H1 (cell line): ENCODE measurements at regions of chr1 and their contacts with region 1.

Region 1: GRCh38 chr1:93980320-93981273 is 71.4 kb upstream of the GCLM start:
- DNase-seq: peak in 1 of 2 experiments; percentile 58
- H3K4me3 ChIP-seq: no peak overlapping the region
- H3K27ac ChIP-seq: no peak overlapping the region
- H3K4me1 ChIP-seq: peaks cover 1 to 10% (median 6%) of the 10 kb centered on the region in 4 experiments; a peak in 6 of 7 replicates
- H3K27me3 ChIP-seq: no peaks in the 10 kb centered on the region
- CTCF ChIP-seq: peak; percentile 65 to 78 (median 73)
- EP300 ChIP-seq: no peak
- POLR2A ChIP-seq: no peak
- RAD21 ChIP-seq: peak; percentile 29 to 54; a peak in 3 of 4 replicates

Region 2: DNA sequence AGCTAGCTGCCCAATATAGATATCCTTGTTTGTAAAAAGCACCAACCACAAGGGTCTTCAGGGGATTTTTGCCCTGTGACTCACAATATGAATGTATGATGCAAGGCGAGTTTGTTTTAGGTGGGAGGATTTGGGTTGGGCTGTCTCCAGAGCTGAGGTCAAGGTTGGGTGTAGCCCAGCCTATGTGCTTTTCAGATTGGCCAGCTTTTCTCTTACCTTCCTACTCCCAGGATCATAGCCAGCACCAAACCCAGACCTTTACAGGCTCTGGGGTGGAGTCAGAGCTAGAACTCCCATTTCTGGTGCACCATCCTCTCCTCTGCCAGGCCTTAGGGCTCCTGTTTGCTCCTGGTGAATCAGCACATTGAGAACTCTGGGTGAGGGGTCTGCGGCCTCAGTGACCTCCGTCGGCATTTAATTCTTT is 15.8 kb before region 1 on chr1:
- CTCF ChIA-PET with region 1: interaction called, 66 read pairs
- POLR2A ChIA-PET with region 1: no interaction called
- DNase-seq: no peak
- H3K4me3 ChIP-seq: no peak overlapping the region
- H3K27ac ChIP-seq: no peak overlapping the region
- H3K4me1 ChIP-seq: no peaks in the 10 kb centered on the region
- H3K27me3 ChIP-seq: no peaks in the 10 kb centered on the region
- CTCF ChIP-seq: no peak
- EP300 ChIP-seq: no peak
- POLR2A ChIP-seq: no peak
- RAD21 ChIP-seq: no peak

Region 3: GRCh38 chr1:93995837-93996536 is 15.4 kb after region 1 on chr1:
- CTCF ChIA-PET with region 1: interaction called, 46 read pairs
- POLR2A ChIA-PET with region 1: no interaction called
- DNase-seq: no peak
- H3K4me3 ChIP-seq: no peak overlapping the region
- H3K27ac ChIP-seq: no peak overlapping the region
- H3K4me1 ChIP-seq: no peaks in the 10 kb centered on the region
- H3K27me3 ChIP-seq: no peaks in the 10 kb centered on the region
- CTCF ChIP-seq: no peak
- EP300 ChIP-seq: no peak
- POLR2A ChIP-seq: no peak
- RAD21 ChIP-seq: no peak

Region 4: DNA sequence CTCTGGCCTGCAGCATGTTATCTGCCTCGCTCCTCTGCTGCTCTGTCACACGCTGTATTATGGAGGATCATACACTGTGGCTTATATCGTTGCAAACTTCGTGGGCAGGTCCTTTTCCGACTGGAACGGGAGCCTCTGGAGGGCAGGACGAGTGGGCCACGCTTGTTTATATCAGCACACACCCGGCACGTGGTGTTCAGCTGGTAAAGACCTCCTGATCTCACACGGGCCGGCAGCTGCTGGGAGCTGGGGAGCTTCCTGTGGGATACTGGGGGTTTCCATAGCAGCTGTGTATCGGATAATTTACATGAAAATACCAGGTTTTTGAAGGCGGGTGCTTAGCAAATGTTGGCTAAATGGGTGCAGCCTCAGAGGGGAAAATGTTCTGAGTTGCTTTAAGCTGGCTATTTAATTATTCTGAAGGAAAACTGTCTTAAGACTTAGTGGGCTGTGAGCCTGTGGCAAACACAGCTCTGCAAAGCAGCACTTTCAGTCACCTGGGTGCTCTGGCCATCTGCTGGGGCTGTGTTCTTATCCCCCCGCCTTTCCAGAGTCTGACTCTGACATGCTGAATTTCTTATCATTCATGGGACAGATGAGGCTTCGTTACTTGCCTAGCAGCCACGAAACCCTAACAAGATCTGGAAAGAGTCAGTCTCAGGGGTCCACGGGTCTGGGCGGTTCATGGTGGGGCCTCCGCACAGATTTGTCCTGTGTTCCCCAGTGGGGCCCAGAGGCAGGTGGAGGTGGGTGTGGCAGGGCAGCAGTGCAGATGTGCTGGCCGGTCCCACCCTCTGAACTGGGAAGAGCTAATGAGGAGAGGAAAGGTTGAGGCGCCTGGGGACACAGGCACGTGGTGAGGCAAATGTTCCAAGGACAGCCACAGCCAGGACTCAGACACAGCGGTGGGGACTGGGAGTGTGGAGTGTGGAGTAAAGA is 32.4 kb after region 1 on chr1:
- CTCF ChIA-PET with region 1: interaction called, 10 read pairs
- POLR2A ChIA-PET with region 1: interaction called, 4 read pairs
- DNase-seq: peak in 1 of 2 experiments; percentile 62
- H3K4me3 ChIP-seq: peak overlapping the region in 1 of 4 experiments; percentile 24; a peak in 1 of 8 replicates
- H3K27ac ChIP-seq: no peak overlapping the region
- H3K4me1 ChIP-seq: peaks cover 6 to 24% (median 15%) of the 10 kb centered on the region in 4 experiments
- H3K27me3 ChIP-seq: peaks cover 0 to 28% (median 14%) of the 10 kb centered on the region in 4 experiments; a peak in 4 of 7 replicates
- CTCF ChIP-seq: no peak
- EP300 ChIP-seq: no peak
- POLR2A ChIP-seq: no peak
- RAD21 ChIP-seq: no peak

Region 5: GRCh38 chr1:94258873-94259331 is 278.3 kb after region 1 on chr1:
- CTCF ChIA-PET with region 1: no interaction called
- POLR2A ChIA-PET with region 1: no interaction called
- DNase-seq: no peak
- H3K4me3 ChIP-seq: no peak overlapping the region
- H3K27ac ChIP-seq: no peak overlapping the region
- H3K4me1 ChIP-seq: peaks cover 0 to 5% (median 2%) of the 10 kb centered on the region in 4 experiments; a peak in 2 of 7 replicates
- H3K27me3 ChIP-seq: peaks cover 39 to 75% (median 60%) of the 10 kb centered on the region in 4 experiments
- CTCF ChIP-seq: no peak
- EP300 ChIP-seq: no peak
- POLR2A ChIP-seq: no peak
- RAD21 ChIP-seq: no peak